Activated naive CD4-positive, alpha-beta T cell treated with anti-CD3 and anti-CD28 coated beads for 36 hours (primary cell): ENCODE measurements at regions of chr15 and their contacts with region 1.

Region 1: GRCh38 chr15:70545526-70545925 is 217.8 kb downstream of the UACA start:
- DNase-seq: no peak
- H3K4me3 Mint-ChIP-seq: no peak overlapping the region
- H3K27ac Mint-ChIP-seq: peak overlapping the region; percentile 91
- H3K4me1 Mint-ChIP-seq: peaks cover 60% of the 10 kb centered on the region
- H3K27me3 Mint-ChIP-seq: no peaks in the 10 kb centered on the region

Region 2: DNA sequence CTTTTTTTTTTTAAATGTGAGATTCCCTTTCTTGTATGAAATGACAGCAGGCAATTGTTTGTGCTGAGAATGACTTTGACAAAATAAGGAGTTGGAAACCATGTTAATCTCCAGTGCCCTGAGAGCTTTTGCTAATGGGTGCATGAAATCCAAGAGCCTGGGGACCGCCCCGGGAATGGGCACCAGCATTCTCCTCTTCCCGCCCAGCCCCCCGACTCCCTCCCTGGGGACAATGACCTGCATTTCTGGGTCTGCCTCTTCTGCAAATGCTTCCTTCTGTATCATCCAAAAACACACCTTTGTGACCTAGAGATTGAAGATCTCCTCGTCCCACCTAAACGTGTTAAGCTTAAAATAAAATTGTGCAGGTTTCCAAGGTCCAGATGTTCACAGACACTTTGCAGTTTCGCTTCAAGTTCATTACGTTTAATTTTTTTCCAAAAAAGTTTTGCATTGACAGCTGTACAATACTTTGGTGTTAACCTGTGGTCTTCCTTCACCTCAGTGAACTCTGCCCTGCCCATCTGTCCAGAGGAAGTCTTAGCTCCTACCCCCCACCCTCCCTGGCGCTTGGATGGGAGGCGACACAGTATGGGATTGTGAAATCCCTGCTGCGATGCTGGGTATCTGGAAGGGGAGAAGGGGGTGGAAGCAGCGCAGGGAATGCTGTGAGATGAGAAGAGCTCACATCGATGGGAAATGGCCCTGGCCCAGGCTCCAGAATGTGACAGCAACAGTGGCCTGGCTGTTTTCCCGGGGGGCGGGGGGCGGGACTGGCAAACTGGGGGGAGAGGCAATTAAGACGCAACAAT is 497.9 kb before region 1 on chr15:
- CTCF ChIA-PET with region 1: no interaction called
- intact Hi-C with region 1: no loop called
- DNase-seq: no peak
- H3K4me3 Mint-ChIP-seq: no peak overlapping the region
- H3K27ac Mint-ChIP-seq: no peak overlapping the region
- H3K4me1 Mint-ChIP-seq: no peaks in the 10 kb centered on the region
- H3K27me3 Mint-ChIP-seq: no peaks in the 10 kb centered on the region

Region 3: DNA sequence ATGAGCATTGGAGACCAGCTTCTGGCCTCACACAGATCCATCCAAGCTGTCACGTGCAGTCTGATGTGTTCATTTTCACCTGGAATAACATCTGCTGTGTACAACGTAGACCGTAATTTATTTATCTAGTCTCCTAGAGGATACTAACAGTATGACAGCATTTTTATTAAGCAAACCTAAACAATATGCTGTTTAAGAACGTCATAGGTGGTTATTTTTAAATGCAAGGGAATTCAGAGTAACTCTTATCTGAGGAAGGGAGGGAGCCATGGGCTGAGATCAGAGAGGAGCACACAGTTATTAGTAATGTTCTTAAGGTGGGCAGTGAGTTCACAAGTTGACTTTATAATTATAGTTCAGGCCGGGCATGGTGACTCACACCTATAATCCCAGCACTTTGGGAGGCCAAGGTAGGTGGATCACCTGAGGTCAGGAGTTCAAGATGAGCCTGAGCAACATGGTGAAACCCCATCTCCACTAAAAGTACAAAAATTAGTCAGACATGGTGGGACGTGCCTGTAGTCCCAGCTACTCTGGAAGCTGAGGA is 24.2 kb after region 1 on chr15:
- CTCF ChIA-PET with region 1: interaction called, 5 read pairs
- intact Hi-C with region 1: loop called (anchors 1 kb)
- DNase-seq: peak; percentile 64
- H3K4me3 Mint-ChIP-seq: no peak overlapping the region
- H3K27ac Mint-ChIP-seq: no peak overlapping the region
- H3K4me1 Mint-ChIP-seq: peaks cover 12% of the 10 kb centered on the region
- H3K27me3 Mint-ChIP-seq: no peaks in the 10 kb centered on the region